Prostate gland (tissue), 2 donors: ENCODE measurements at regions of chrX and their contacts with region 1.

Region 1: GRCh38 chrX:3119376-3119775 is 78.1 kb downstream of the ARSF start:
- DNase-seq: no peak
- H3K4me3 ChIP-seq: no peak overlapping the region
- H3K27ac ChIP-seq: no peak overlapping the region
- H3K4me1 ChIP-seq: no peaks in the 10 kb centered on the region
- H3K27me3 ChIP-seq: no peaks in the 10 kb centered on the region
- CTCF ChIP-seq: no peak
- POLR2A ChIP-seq: no peak

Region 2: GRCh38 chrX:3548765-3549391 is 429.5 kb after region 1 on chrX:
- intact Hi-C with region 1: loop called (anchors 2 kb)
- DNase-seq: peak; percentile 6
- H3K4me3 ChIP-seq: no peak overlapping the region
- H3K27ac ChIP-seq: no peak overlapping the region
- H3K4me1 ChIP-seq: no peaks in the 10 kb centered on the region
- H3K27me3 ChIP-seq: no peaks in the 10 kb centered on the region
- CTCF ChIP-seq: peak in 2 of 4 experiments; percentile 46 to 52
- POLR2A ChIP-seq: no peak

Region 3: GRCh38 chrX:3638280-3638873 is 519.0 kb after region 1 on chrX:
- intact Hi-C with region 1: loop called (anchors 10 kb)
- DNase-seq: peak; percentile 6
- H3K4me3 ChIP-seq: no peak overlapping the region
- H3K27ac ChIP-seq: no peak overlapping the region
- H3K4me1 ChIP-seq: no peaks in the 10 kb centered on the region
- H3K27me3 ChIP-seq: no peaks in the 10 kb centered on the region
- CTCF ChIP-seq: peak in 3 of 4 experiments; percentile 41 to 49 (median 47)
- POLR2A ChIP-seq: no peak